Psoas muscle (tissue), 8 donors: ENCODE measurements at regions of chr22 and their contacts with region 1.

Region 1: GRCh38 chr22:41940832-41941765 is 5.9 kb downstream of the CENPM start:
- DNase-seq: peak; percentile 86 to 91
- ATAC-seq: peak; percentile 81 to 87 (median 85)
- H3K4me3 ChIP-seq: no peak overlapping the region
- H3K27ac ChIP-seq: peak overlapping the region; percentile 26
- H3K4me1 ChIP-seq: peaks cover 13% of the 10 kb centered on the region
- H3K27me3 ChIP-seq: no peaks in the 10 kb centered on the region
- CTCF ChIP-seq: peak; percentile 97

Region 2: GRCh38 chr22:41697126-41697775 is 243.8 kb before region 1 on chr22:
- intact Hi-C with region 1: loop called (anchors 1 to 2 kb)
- DNase-seq: peak; percentile 94 to 95
- ATAC-seq: peak; percentile 79 to 91 (median 82)
- H3K4me3 ChIP-seq: peak overlapping the region; percentile 42
- H3K27ac ChIP-seq: peak overlapping the region; percentile 41
- H3K4me1 ChIP-seq: peaks cover 8% of the 10 kb centered on the region
- H3K27me3 ChIP-seq: no peaks in the 10 kb centered on the region
- CTCF ChIP-seq: peak; percentile 97

Region 3: GRCh38 chr22:41746567-41747400 is 194.3 kb before region 1 on chr22:
- intact Hi-C with region 1: loop called (anchors 2 kb)
- DNase-seq: peak; percentile 59 to 79
- ATAC-seq: peak; percentile 78 to 97 (median 95)
- H3K4me3 ChIP-seq: no peak overlapping the region
- H3K27ac ChIP-seq: no peak overlapping the region
- H3K4me1 ChIP-seq: no peaks in the 10 kb centered on the region
- H3K27me3 ChIP-seq: peaks cover 0 to 5% (median 0%) of the 10 kb centered on the region in 3 donors
- CTCF ChIP-seq: peak; percentile 68

Region 4: GRCh38 chr22:41808400-41808799 is 132.7 kb before region 1 on chr22:
- intact Hi-C with region 1: no loop called
- DNase-seq: no peak
- ATAC-seq: no peak
- H3K4me3 ChIP-seq: no peak overlapping the region
- H3K27ac ChIP-seq: no peak overlapping the region
- H3K4me1 ChIP-seq: no peaks in the 10 kb centered on the region
- H3K27me3 ChIP-seq: no peaks in the 10 kb centered on the region
- CTCF ChIP-seq: no peak

Region 5: DNA sequence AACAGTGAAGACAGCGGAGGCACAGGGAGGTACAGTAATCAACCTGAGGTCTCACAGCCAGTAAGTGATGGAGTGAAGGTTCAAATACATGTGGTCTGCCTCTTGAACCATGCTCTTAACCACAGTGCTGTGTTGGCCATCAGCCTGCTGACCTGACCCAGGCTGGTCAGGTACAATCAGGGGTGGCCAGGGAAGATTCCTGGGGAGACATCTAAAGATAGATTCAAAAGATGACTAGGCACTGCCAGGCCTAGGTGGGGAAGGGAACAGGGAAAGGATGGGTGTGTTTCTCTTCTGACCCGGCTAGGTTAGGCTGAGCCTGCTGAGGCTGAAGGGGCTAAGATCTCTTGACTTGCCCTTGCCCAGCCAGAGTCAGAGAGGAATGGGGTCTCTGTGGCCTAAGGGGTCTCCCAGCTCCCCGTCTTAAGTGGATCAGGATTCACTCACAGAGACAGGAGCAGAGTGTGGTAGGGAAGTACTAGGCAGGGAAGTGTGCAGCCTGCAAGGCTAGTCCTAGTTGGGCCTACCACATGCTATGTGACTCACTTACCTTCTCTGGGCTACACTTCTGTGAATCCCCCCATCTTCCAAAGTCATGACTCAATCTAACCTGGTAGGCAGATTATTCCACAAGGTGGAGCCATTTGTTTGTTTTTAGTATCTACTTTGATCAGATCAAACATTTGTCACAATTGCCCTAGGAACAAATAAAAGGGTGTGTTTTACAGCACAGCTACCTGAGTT is 118.6 kb before region 1 on chr22:
- intact Hi-C with region 1: loop called (anchors 1 kb)
- DNase-seq: no peak
- ATAC-seq: peak in 3 of 4 donors; percentile 27 to 53 (median 47)
- H3K4me3 ChIP-seq: no peak overlapping the region
- H3K27ac ChIP-seq: no peak overlapping the region
- H3K4me1 ChIP-seq: peaks cover 23% of the 10 kb centered on the region
- H3K27me3 ChIP-seq: no peaks in the 10 kb centered on the region
- CTCF ChIP-seq: peak; percentile 56

Region 6: GRCh38 chr22:41834005-41834944 is 106.8 kb before region 1 on chr22:
- intact Hi-C with region 1: no loop called
- DNase-seq: no peak
- ATAC-seq: no peak
- H3K4me3 ChIP-seq: peak overlapping the region; percentile 78
- H3K27ac ChIP-seq: peak overlapping the region; percentile 92
- H3K4me1 ChIP-seq: no peaks in the 10 kb centered on the region
- H3K27me3 ChIP-seq: no peaks in the 10 kb centered on the region
- CTCF ChIP-seq: no peak